Breast epithelium (tissue), 4 donors: ENCODE measurements at regions of chr10 and their contacts with region 1.

Region 1: GRCh38 chr10:63629363-63630084 is 108.3 kb downstream of the REEP3 start:
- DNase-seq: peak; percentile 89 to 95
- H3K4me3 ChIP-seq: peak overlapping the region; percentile 52 to 78 (median 66)
- H3K27ac ChIP-seq: peak overlapping the region; percentile 98 to 99
- H3K4me1 ChIP-seq: peaks cover 0 to 3% of the 10 kb centered on the region in 2 donors
- H3K27me3 ChIP-seq: no peaks in the 10 kb centered on the region
- CTCF ChIP-seq: peak; percentile 63 to 79 (median 71)
- POLR2A ChIP-seq: no peak

Region 2: GRCh38 chr10:63707254-63707910 is 77.9 kb after region 1 on chr10:
- intact Hi-C with region 1: loop called (anchors 10 kb)
- DNase-seq: no peak
- H3K4me3 ChIP-seq: no peak overlapping the region
- H3K27ac ChIP-seq: peak overlapping the region; percentile 76 to 83
- H3K4me1 ChIP-seq: peaks cover 0 to 9% of the 10 kb centered on the region in 2 donors
- H3K27me3 ChIP-seq: no peaks in the 10 kb centered on the region
- CTCF ChIP-seq: no peak
- POLR2A ChIP-seq: no peak